Cardiac septum (tissue), 1 donor: ENCODE measurements at regions of chr1 and their contacts with region 1.

Region 1: DNA sequence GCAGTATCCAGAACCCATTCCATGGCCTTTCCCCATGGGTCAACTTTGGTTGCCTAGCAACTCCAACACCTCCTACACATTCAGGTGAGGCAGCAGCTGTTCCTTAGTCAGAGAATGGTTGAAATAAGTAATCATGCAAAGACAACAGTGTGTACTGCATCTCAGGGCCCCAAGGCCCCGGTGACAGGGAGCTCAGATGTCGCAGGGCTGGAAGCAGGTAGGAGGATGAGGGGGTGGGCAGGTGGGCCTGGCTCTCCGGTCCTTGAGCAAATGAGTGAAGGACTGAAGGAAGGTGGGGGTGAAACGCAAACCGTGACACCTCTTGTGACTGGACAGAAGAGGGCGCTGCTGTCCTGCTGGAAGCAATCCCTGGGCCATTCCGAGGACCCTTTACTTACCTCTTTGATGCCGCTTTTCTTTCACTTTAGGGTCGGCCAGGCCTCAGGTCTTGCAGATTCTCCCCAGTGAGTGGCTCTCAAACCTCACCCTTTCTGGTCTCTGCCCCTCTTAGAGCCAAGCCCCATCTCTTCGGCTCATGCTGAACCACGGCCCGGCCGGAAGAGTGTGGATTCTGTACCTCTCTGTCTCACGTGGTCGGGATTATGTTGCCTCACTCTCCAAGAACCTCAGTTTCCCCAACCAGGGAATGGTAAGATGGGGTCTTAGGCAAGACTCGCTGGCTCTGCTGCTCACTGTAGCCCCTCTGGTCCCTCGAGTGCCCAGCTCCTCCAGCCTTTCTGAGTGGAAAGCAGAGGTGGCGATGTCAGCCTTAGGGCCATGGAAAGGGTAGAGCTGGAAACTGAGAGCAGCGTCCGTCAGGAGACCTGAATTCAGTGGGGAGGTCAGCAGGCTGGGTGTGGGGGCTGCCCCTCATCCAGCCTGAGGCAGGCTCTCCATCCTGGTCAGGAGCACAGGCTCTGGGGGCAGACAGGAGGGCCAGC is 5.6 kb upstream of the KCNA10 start:
- DNase-seq: no peak

Region 2: GRCh38 chr1:110487726-110488125 is 36.9 kb before region 1 on chr1:
- intact Hi-C with region 1: no loop called
- DNase-seq: no peak

Region 3: DNA sequence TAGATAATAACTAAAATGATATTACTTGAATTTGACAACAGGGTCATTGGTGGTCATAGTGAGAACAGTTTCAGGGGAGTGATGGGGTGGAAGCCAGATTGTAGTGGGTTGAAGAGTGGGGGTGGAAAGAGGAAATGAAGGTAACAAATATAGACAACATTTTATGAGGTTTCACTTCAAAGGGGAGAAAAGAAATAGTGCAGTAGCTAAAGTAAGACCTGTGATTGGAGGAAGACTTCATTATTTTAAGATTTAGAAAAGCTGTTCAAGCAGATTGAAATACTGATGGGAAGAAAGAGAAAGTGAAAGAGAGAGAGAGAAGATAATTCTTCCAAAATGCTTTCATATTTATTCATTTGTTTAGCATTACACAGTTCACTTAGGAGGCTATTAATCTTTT is 202.2 kb after region 1 on chr1:
- intact Hi-C with region 1: no loop called
- DNase-seq: no peak

Region 4: DNA sequence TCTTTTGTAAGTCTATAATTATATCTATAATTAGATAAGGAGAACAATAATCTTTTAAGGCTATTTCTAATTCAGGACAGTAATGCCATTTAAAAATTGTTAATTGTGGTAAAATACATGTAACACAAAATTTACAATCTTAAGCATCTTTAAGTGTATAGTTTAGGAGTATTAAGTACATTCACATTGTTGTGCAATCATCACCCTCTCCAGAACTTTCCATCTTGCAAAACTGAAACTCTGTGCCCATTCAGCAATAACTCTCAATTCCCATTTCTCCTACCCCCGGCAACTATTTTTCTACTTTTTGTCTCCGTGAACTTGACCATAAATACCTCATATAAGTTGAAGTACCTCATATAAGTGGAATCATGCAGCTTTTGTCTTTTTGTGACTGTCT is 244.0 kb after region 1 on chr1:
- intact Hi-C with region 1: no loop called
- DNase-seq: no peak

Region 5: GRCh38 chr1:110780600-110781484 is 256.3 kb after region 1 on chr1:
- intact Hi-C with region 1: loop called (anchors 10 kb)
- DNase-seq: no peak